HEK293 (cell line): ENCODE measurements at regions of chr14 and their contacts with region 1.

Region 1: DNA sequence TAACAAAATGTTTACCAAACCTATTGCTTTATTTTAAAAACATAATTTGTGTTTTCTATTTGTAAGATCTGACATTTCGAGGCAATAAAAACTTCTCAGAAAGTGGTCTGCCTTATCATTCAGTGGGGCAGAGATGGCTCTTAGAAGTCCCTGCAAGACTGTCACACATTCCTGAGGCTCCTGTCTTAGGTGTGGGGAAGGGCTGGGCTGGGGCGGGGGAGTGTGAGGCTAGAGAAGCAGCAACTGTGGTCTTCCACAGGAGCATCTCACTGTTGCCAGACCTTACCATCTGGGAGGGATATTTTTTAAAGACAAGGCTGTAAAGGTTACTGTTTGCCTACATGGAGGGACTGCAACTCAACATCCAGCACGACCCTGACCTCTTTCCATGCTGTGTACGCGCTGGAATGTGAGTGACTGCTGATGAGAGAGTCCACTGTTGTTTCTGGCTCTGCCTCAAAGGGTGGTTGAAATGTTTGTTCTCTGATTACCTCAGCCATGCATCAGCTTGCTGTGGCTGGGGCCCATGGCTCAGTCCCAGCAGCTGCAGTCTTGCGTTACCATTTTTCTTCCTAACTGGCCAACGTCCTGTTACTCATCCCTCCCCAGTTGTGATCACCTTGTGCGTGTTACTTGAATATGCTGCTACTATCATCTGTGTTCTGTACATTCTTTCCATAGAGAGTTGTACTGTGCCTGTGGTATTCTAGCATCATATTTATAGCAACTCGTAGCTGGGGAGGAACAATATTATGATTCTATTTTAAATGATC is 12.4 kb downstream of the ERG28 start:
- H3K4me3 ChIP-seq: no peak overlapping the region
- H3K27ac ChIP-seq: no peak overlapping the region
- H3K4me1 ChIP-seq: peaks cover 13% of the 10 kb centered on the region
- CTCF ChIP-seq: no peak

Region 2: DNA sequence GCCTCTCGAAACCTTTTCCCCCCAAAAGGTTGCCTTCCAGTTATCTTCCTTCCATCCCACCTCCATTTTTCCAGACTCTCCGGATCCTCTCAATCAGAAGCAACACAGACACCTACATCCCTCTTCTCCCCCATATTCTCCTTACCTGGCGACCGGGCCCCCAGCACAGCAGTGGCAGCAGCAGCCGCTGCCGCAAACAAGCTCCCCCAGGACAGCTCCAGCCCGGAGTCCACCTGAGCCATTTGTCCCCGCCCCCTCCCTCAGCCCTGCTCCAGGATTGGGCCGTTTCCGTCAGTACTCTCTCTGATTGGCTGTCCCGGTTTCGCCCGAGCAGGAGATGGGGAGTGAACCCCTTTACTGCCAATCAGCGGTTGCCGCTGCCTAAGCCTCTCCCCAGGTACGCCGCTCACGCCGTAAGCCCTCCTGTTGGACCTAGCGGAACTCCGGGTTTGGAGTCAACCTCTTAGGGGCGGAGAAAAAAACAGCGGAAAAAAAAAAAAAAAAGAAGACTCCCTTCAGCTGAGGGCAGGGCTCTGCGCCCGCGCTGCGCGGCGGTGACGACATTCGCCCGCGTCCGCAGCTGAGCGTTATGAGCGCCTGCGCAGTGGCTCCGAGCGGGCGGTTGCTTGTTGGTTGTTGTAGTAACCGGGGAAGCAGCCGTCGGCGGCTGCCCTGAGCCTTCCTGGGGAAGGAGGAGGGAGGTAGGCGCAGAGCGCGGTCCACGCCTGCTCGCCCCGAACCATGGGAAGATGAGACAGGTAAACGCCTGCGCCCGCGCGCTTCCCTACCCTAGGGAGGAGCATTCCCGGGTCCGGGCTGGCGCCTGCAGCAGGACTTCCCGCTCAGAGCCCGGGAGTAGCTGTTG is 12.6 kb after region 1 on chr14 and contains the starts of genes ERG28 and TTLL5:
- CTCF ChIA-PET with region 1: interaction called, 4 read pairs
- POLR2A ChIA-PET with region 1: interaction called, 11 read pairs
- H3K4me3 ChIP-seq: peak within 1 kb of the TSS; percentile 96
- H3K27ac ChIP-seq: peak within 1 kb of the TSS; percentile 79
- H3K4me1 ChIP-seq: peaks cover 3% of the 10 kb centered on the region; the same call in 1 of the 2 replicates
- CTCF ChIP-seq: no peak

Region 3: DNA sequence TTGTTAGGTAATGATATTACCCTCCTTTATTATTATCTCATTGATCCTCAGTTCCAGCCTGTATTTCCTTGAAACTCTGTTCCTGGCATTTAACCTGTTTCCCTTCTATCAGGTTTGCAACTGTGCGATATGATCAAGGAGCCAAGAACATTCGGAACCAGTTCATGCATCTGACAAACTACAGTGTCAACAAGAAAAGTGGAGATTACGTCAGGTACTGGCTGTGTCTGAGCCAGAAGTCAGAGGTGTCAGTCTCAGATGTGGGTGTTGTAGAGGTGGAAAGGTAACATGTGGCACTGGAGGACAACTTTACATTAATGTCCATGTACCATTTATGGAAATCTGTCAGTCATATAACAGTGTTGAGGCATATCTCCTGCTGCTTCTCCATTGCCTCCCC is 69.5 kb after region 1 on chr14:
- CTCF ChIA-PET with region 1: no interaction called
- POLR2A ChIA-PET with region 1: no interaction called
- H3K4me3 ChIP-seq: no peak overlapping the region
- H3K27ac ChIP-seq: no peak overlapping the region
- H3K4me1 ChIP-seq: peaks cover 10% of the 10 kb centered on the region
- CTCF ChIP-seq: no peak

Region 4: DNA sequence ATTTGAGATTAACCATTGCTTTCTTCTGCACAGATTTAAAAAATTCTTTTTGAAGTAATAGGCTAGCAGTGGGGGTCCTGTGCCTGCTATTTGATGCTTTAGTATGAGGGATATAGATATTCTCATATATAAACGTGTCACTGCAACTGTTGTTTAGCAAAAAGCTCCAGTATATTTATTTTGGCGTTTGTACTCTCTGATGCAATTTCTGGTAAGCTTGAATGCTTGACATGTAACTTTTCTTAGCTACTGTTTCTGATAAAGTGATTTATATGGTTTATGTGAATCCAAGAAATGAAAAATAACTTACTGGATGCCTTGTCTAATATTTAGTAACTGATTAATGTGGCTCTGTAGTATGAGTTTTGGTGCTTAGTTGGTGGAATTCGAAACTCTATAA is 89.9 kb after region 1 on chr14:
- CTCF ChIA-PET with region 1: no interaction called
- POLR2A ChIA-PET with region 1: no interaction called
- H3K4me3 ChIP-seq: no peak overlapping the region
- H3K27ac ChIP-seq: no peak overlapping the region
- H3K4me1 ChIP-seq: no peaks in the 10 kb centered on the region
- CTCF ChIP-seq: no peak